ENCODE measurements at regions of chr22 and their contacts with region 1.

Region 1: GRCh38 chr22:35648066-35649025 is at the start of gene APOL6:
- DNase-seq: peak; percentile 84
- H3K4me3 Mint-ChIP-seq: peak within 1 kb of the TSS; percentile 98
- H3K27ac Mint-ChIP-seq: peak within 1 kb of the TSS; percentile 100
- H3K4me1 Mint-ChIP-seq: peaks cover 36% of the 10 kb centered on the region
- H3K27me3 Mint-ChIP-seq: no peaks in the 10 kb centered on the region
- total RNA-seq, gene APOL6: 33.6 to 33.8 TPM

Region 2: GRCh38 chr22:35627264-35628041 is 20.9 kb before region 1 on chr22:
- CTCF ChIA-PET with region 1: interaction called, 13 read pairs
- intact Hi-C with region 1: loop called (anchors 1 kb)
- DNase-seq: peak; percentile 85
- H3K4me3 Mint-ChIP-seq: peak overlapping the region; percentile 67
- H3K27ac Mint-ChIP-seq: no peak overlapping the region
- H3K4me1 Mint-ChIP-seq: peaks cover 16% of the 10 kb centered on the region
- H3K27me3 Mint-ChIP-seq: no peaks in the 10 kb centered on the region

Region 3: GRCh38 chr22:35660291-35661127 is 12.2 kb after region 1 on chr22:
- CTCF ChIA-PET with region 1: interaction called, 6 read pairs
- intact Hi-C with region 1: loop called (anchors 1 kb)
- DNase-seq: peak; percentile 78
- H3K4me3 Mint-ChIP-seq: peak overlapping the region; percentile 32
- H3K27ac Mint-ChIP-seq: peak overlapping the region; percentile 94
- H3K4me1 Mint-ChIP-seq: peaks cover 70% of the 10 kb centered on the region
- H3K27me3 Mint-ChIP-seq: no peaks in the 10 kb centered on the region

Region 4: DNA sequence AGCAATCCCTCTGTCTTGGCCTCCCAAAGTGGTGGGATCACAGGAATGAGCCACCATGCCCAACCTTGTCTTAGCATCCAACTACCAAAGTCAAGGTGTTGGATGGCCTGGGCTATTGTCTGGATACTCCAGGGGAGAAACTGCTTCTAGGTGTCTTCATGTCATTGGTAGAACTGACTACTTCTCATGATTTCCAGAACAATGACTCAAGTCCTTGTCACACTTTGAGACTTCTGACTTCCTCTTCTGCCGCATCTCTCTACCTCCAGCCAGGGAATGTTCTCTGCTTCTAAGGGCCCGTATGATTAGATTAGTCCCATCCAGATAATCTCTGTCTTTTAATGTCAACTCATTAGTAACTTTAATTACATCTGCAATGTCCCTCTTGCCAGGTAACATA is 30.5 kb after region 1 on chr22:
- CTCF ChIA-PET with region 1: no interaction called
- intact Hi-C with region 1: loop called (anchors 1 kb)
- DNase-seq: peak; percentile 16
- H3K4me3 Mint-ChIP-seq: no peak overlapping the region
- H3K27ac Mint-ChIP-seq: peak overlapping the region; percentile 80
- H3K4me1 Mint-ChIP-seq: peaks cover 26% of the 10 kb centered on the region
- H3K27me3 Mint-ChIP-seq: no peaks in the 10 kb centered on the region

Region 5: GRCh38 chr22:35697142-35697541 is 48.8 kb after region 1 on chr22:
- CTCF ChIA-PET with region 1: no interaction called
- intact Hi-C with region 1: loop called (anchors 5 kb)
- DNase-seq: peak; percentile 43
- H3K4me3 Mint-ChIP-seq: no peak overlapping the region
- H3K27ac Mint-ChIP-seq: no peak overlapping the region
- H3K4me1 Mint-ChIP-seq: no peaks in the 10 kb centered on the region
- H3K27me3 Mint-ChIP-seq: no peaks in the 10 kb centered on the region

Region 6: GRCh38 chr22:36156515-36157419 is 508.4 kb after region 1 on chr22:
- CTCF ChIA-PET with region 1: no interaction called
- intact Hi-C with region 1: loop called (anchors 5 kb)
- DNase-seq: peak; percentile 92
- H3K4me3 Mint-ChIP-seq: peak overlapping the region; percentile 92
- H3K27ac Mint-ChIP-seq: peak overlapping the region; percentile 99
- H3K4me1 Mint-ChIP-seq: peaks cover 88% of the 10 kb centered on the region
- H3K27me3 Mint-ChIP-seq: no peaks in the 10 kb centered on the region

Region 7: GRCh38 chr22:36481393-36482168 is 833.2 kb after region 1 on chr22 and contains the start of gene TXN2:
- CTCF ChIA-PET with region 1: no interaction called
- intact Hi-C with region 1: loop called (anchors 2 kb)
- DNase-seq: peak; percentile 98
- H3K4me3 Mint-ChIP-seq: peak within 1 kb of the TSS; percentile 95
- H3K27ac Mint-ChIP-seq: peak within 1 kb of the TSS; percentile 89
- H3K4me1 Mint-ChIP-seq: peaks cover 13% of the 10 kb centered on the region
- H3K27me3 Mint-ChIP-seq: no peaks in the 10 kb centered on the region
- total RNA-seq, gene TXN2: 108 to 113 TPM